Activated T-helper 2 cell treated with anti-CD3 and anti-CD28 coated beads, Interferon-gamma antibody, Interleukin-2, Interleukin-4, amounts not matched to agents 10 μg/mL and 5 μg/mL and 100 μg/mL, durations not matched to agents 14 hours and 24 hours and 36 hours (primary cell): ENCODE measurements at regions of chr5 and their contacts with region 1.

Region 1: DNA sequence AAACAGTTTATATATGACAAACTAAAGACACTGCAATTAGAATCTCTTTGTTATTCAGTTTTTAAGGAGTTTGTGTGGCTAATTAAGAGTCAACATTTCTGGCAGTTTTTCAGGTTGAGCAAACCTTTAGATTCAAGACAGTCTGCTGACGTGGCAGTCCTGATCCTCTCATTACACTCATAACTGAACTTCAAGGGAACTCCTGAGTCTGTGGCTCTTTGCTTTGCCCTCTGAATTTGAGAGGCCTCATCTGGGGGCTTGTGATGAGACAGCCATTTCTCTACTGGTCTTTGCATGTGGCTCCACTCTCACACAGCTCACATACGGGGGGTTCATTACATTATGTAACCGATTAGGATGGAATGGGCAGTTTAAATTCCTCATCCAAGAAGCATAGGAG is 182.9 kb upstream of the MEF2C start:
- DNase-seq: peak; percentile 10
- H3K4me3 Mint-ChIP-seq: no peak overlapping the region
- H3K27ac Mint-ChIP-seq: peak overlapping the region; percentile 77
- H3K4me1 Mint-ChIP-seq: peaks cover 24% of the 10 kb centered on the region
- H3K27me3 Mint-ChIP-seq: no peaks in the 10 kb centered on the region

Region 2: GRCh38 chr5:88833371-88834130 is 232.4 kb before region 1 on chr5:
- intact Hi-C with region 1: loop called (anchors 1 kb)
- DNase-seq: no peak
- H3K4me3 Mint-ChIP-seq: no peak overlapping the region
- H3K27ac Mint-ChIP-seq: no peak overlapping the region
- H3K4me1 Mint-ChIP-seq: peaks cover 17% of the 10 kb centered on the region
- H3K27me3 Mint-ChIP-seq: peaks cover 12% of the 10 kb centered on the region

Region 3: DNA sequence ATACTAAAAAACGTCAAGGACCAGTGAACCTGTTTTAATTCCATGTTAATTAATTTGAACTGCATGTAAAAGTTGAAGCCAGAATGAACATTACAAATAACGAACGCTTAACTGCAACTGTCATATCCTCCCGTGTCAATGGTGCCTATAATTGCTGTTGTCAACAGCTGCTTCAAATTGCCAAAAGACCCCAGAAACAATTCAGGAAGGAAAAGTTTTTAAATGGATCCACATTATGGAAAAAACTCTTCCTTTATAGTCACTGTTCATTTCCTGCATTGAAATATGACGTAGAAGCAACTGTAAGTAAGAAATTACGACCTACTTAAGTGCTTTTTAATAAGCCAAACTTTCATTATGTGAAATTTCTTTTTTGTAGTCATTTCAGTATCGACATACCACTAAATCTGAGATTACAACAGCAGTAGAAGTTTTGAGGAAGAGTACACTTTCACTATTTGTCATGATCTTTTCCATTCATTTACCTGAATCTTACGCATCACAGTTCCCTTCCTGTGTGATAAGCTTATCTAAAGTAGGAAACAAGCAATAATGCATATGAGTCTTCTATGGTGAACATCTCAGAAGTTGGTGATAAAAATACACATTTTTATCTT is 220.7 kb before region 1 on chr5:
- intact Hi-C with region 1: loop called (anchors 1 kb)
- DNase-seq: no peak
- H3K4me3 Mint-ChIP-seq: no peak overlapping the region
- H3K27ac Mint-ChIP-seq: no peak overlapping the region
- H3K4me1 Mint-ChIP-seq: peaks cover 7% of the 10 kb centered on the region
- H3K27me3 Mint-ChIP-seq: peaks cover 26% of the 10 kb centered on the region

Region 4: DNA sequence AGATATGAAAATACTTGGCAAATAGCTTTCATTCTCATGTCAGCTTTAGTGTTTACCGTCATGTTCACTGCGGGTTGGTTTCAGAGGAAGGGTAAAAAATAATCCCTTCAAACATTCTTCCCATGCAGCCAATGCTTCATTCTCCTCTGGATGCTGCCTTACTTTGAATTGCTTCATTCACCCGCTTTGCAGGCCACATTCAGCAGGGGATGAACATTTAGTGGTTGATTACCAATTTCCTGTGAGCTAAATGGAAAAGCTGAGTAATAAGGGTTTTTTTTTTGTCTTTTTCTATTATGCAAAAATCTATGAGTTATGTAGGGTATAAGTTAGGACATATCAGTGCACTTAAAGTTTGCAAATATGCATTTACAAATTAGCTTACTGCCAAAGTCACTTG is 86.7 kb before region 1 on chr5:
- intact Hi-C with region 1: loop called (anchors 1 kb)
- DNase-seq: no peak
- H3K4me3 Mint-ChIP-seq: no peak overlapping the region
- H3K27ac Mint-ChIP-seq: peak overlapping the region; percentile 56
- H3K4me1 Mint-ChIP-seq: peaks cover 17% of the 10 kb centered on the region
- H3K27me3 Mint-ChIP-seq: peaks cover 7% of the 10 kb centered on the region

Region 5: GRCh38 chr5:89005990-89006389 is 59.9 kb before region 1 on chr5:
- intact Hi-C with region 1: loop called (anchors 1 kb)
- DNase-seq: no peak
- H3K4me3 Mint-ChIP-seq: no peak overlapping the region
- H3K27ac Mint-ChIP-seq: no peak overlapping the region
- H3K4me1 Mint-ChIP-seq: peaks cover 19% of the 10 kb centered on the region
- H3K27me3 Mint-ChIP-seq: peaks cover 16% of the 10 kb centered on the region

Region 6: GRCh38 chr5:89043676-89044075 is 22.2 kb before region 1 on chr5:
- intact Hi-C with region 1: loop called (anchors 1 kb)
- DNase-seq: peak; percentile 10
- H3K4me3 Mint-ChIP-seq: no peak overlapping the region
- H3K27ac Mint-ChIP-seq: no peak overlapping the region
- H3K4me1 Mint-ChIP-seq: peaks cover 13% of the 10 kb centered on the region
- H3K27me3 Mint-ChIP-seq: no peaks in the 10 kb centered on the region